ENCODE measurements at regions of chr5 and their contacts with region 1.

Region 1: DNA sequence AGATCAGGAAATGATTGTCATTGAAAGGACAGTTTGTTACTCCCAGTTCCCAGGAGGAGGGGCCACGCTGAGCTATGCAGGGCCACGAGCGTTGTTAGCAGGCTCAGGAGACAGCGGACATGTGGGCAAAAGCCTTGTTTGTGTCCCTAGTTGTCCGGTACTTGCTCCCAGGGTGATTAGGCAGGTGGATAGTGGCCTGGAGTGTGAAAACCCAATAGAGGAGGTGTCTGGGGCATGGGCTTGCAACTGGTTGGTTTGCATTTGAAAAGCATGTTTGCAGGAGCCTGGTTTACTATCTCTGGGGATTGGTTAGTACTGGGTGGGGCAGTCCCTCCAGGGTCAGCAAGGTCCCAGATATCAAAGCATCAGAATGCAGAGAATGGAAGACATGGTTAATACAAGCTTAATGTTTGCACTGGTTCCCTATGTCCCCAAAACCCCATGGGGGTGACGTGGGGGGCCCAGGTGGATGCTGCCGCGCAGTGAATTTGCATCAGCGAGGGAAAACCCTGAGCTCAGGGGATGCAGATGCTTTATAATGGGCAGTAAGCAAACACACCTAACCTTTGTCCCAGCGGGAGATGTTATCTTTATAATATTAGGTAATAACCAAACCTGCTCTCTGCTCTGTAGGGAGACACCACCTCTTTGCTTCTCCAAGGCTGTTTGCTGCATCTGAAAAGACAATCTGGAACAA is 39.7 kb downstream of the ROPN1L start:
- DNase-seq: peak; percentile 84 to 90
- H3K4me3 ChIP-seq: no peak overlapping the region
- H3K4me3 Mint-ChIP-seq: peak overlapping the region; percentile 37
- H3K27ac Mint-ChIP-seq: peak overlapping the region; percentile 90
- H3K4me1 ChIP-seq: peaks cover 59% of the 10 kb centered on the region
- H3K4me1 Mint-ChIP-seq: peaks cover 50% of the 10 kb centered on the region
- H3K27me3 ChIP-seq: no peaks in the 10 kb centered on the region; the same call in 1 of the 2 replicates
- H3K27me3 Mint-ChIP-seq: no peaks in the 10 kb centered on the region
- CTCF ChIP-seq: no peak

Region 2: DNA sequence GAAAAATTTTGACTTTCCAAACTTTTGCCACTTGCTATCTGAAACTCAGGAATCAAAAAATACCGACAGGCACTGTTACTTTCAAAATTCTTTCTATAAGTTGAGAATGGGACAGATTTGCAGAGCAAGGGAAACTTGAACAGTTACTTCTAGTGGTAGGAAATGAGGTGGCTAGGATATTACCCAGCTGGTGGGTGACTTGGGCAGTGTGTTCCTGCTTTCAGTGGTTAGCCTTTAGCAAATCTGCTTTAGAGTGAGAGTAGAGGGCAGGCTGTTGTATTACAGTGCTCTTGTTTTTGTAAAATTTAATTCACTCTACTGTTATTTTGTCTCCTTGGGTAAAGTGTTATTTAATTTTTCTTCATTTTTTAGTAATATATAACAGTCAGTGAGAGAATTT is 79.9 kb before region 1 on chr5:
- CTCF ChIA-PET with region 1: no interaction called
- POLR2A ChIA-PET with region 1: no interaction called
- intact Hi-C with region 1: no loop called
- DNase-seq: no peak
- H3K4me3 ChIP-seq: no peak overlapping the region
- H3K4me3 Mint-ChIP-seq: no peak overlapping the region
- H3K27ac Mint-ChIP-seq: no peak overlapping the region
- H3K4me1 ChIP-seq: no peaks in the 10 kb centered on the region
- H3K4me1 Mint-ChIP-seq: no peaks in the 10 kb centered on the region
- H3K27me3 ChIP-seq: no peaks in the 10 kb centered on the region
- H3K27me3 Mint-ChIP-seq: no peaks in the 10 kb centered on the region
- CTCF ChIP-seq: no peak

Region 3: DNA sequence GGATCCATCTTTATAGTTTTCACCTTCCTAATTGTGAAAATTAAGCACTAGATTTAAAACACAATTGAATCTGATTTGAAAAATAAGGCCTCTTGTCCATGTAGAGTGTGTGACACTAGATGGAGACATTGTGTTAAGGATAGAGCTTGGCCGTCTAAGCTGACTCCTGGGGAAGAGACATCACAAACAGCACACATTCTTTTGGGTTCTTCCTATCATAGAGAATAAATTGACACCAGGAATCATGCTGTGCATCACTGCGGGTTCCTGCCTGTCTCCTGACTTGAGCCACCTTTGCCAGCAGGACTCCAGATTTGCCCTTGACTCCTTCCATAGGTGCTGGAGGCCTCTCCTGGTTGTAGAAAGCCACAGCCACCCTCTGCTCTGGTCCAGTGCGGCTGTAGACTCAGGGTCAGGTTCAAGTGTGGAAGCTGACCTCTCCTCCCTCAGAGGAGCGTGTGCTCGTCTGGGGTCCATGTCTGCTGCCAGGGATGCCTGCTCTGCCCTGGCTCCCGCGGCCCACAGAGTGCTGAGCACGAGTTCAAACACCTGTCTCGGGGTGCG is 28.5 kb before region 1 on chr5:
- CTCF ChIA-PET with region 1: interaction called, 3 read pairs
- POLR2A ChIA-PET with region 1: no interaction called
- intact Hi-C with region 1: loop called (anchors 1 kb)
- DNase-seq: peak; percentile 55 to 69
- H3K4me3 ChIP-seq: no peak overlapping the region
- H3K4me3 Mint-ChIP-seq: no peak overlapping the region
- H3K27ac Mint-ChIP-seq: no peak overlapping the region
- H3K4me1 ChIP-seq: peaks cover 11% of the 10 kb centered on the region
- H3K4me1 Mint-ChIP-seq: no peaks in the 10 kb centered on the region
- H3K27me3 ChIP-seq: no peaks in the 10 kb centered on the region
- H3K27me3 Mint-ChIP-seq: no peaks in the 10 kb centered on the region
- CTCF ChIP-seq: peak; percentile 67 to 79

Region 4: GRCh38 chr5:10505517-10506095 is 24.2 kb after region 1 on chr5:
- CTCF ChIA-PET with region 1: interaction called, 5 read pairs
- POLR2A ChIA-PET with region 1: no interaction called
- intact Hi-C with region 1: loop called (anchors 1 kb)
- DNase-seq: no peak
- H3K4me3 ChIP-seq: no peak overlapping the region
- H3K4me3 Mint-ChIP-seq: no peak overlapping the region
- H3K27ac Mint-ChIP-seq: no peak overlapping the region
- H3K4me1 ChIP-seq: peaks cover 31% of the 10 kb centered on the region
- H3K4me1 Mint-ChIP-seq: peaks cover 20% of the 10 kb centered on the region
- H3K27me3 ChIP-seq: no peaks in the 10 kb centered on the region
- H3K27me3 Mint-ChIP-seq: no peaks in the 10 kb centered on the region
- CTCF ChIP-seq: no peak

Region 5: GRCh38 chr5:10563945-10564837 is 82.8 kb after region 1 on chr5 and contains the start of gene ANKRD33B:
- CTCF ChIA-PET with region 1: no interaction called
- POLR2A ChIA-PET with region 1: interaction called, 3 read pairs
- intact Hi-C with region 1: loop called (anchors 1 kb)
- DNase-seq: peak; percentile 82 to 86
- H3K4me3 ChIP-seq: peak within 1 kb of the TSS; percentile 77
- H3K4me3 Mint-ChIP-seq: peak within 1 kb of the TSS; percentile 90
- H3K27ac Mint-ChIP-seq: peak within 1 kb of the TSS; percentile 10
- H3K4me1 ChIP-seq: peaks cover 50% of the 10 kb centered on the region
- H3K4me1 Mint-ChIP-seq: peaks cover 27% of the 10 kb centered on the region
- H3K27me3 ChIP-seq: no peaks in the 10 kb centered on the region
- H3K27me3 Mint-ChIP-seq: no peaks in the 10 kb centered on the region
- CTCF ChIP-seq: no peak
- total RNA-seq, gene ANKRD33B: 22.8 and 25.3 TPM in 2 replicates

Measured in Caco-2 (cell line).